CD14-positive monocyte (primary cell): ENCODE measurements at regions of chr9 and their contacts with region 1.

Region 1: GRCh38 chr9:83707768-83708514 is at the start of gene UBQLN1:
- DNase-seq: peak; percentile 90 to 92 (median 92)
- H3K4me3 ChIP-seq: peak within 1 kb of the TSS; percentile 49 to 96 (median 90)
- H3K4me3 Mint-ChIP-seq: peak within 1 kb of the TSS; percentile 96 to 98
- H3K27ac ChIP-seq: peak within 1 kb of the TSS; percentile 99 to 100
- H3K27ac Mint-ChIP-seq: peak within 1 kb of the TSS; percentile 100
- H3K4me1 ChIP-seq: peaks cover 15 to 26% of the 10 kb centered on the region in 2 donors
- H3K4me1 Mint-ChIP-seq: peaks cover 30% of the 10 kb centered on the region
- H3K27me3 ChIP-seq: no peaks in the 10 kb centered on the region
- H3K27me3 Mint-ChIP-seq: peaks cover 0 to 1% (median 0%) of the 10 kb centered on the region in 3 donors
- CTCF ChIP-seq: no peak
- polyA plus RNA-seq, gene UBQLN1: 45.9 to 52.9 (median 46.9) TPM

Region 2: GRCh38 chr9:83920927-83921707 is 213.2 kb after region 1 on chr9 and contains the start of gene KIF27:
- intact Hi-C with region 1: loop called in 1 of 2 experiments (anchors 10 kb)
- DNase-seq: peak; percentile 96 to 99 (median 98)
- H3K4me3 ChIP-seq: peak within 1 kb of the TSS; percentile 44 to 74 (median 60)
- H3K4me3 Mint-ChIP-seq: peak within 1 kb of the TSS; percentile 83 to 89
- H3K27ac ChIP-seq: peak within 1 kb of the TSS; percentile 77 to 85
- H3K27ac Mint-ChIP-seq: peak within 1 kb of the TSS; percentile 92 to 97 (median 95)
- H3K4me1 ChIP-seq: peaks cover 15 to 20% of the 10 kb centered on the region in 2 donors
- H3K4me1 Mint-ChIP-seq: peaks cover 12% of the 10 kb centered on the region
- H3K27me3 ChIP-seq: no peaks in the 10 kb centered on the region
- H3K27me3 Mint-ChIP-seq: peaks cover 0 to 4% (median 0%) of the 10 kb centered on the region in 3 donors
- CTCF ChIP-seq: peak; percentile 72
- polyA plus RNA-seq, gene KIF27: 0.58 to 1.3 (median 1.1) TPM